ENCODE measurements at regions of chr10 and their contacts with region 1.

Region 1: GRCh38 chr10:29784175-29784773 is 149.5 kb upstream of the SVIL start:
- DNase-seq: peak; percentile 77

Region 2: GRCh38 chr10:29804025-29804852 is 20.0 kb after region 1 on chr10:
- intact Hi-C with region 1: no loop called
- DNase-seq: no peak

Region 3: GRCh38 chr10:29841724-29842649 is 57.7 kb after region 1 on chr10:
- intact Hi-C with region 1: loop called (anchors 5 kb)
- DNase-seq: peak; percentile 78